Activated B cell treated with CpG ODN at 0.5 μM for 24 hours (primary cell): ENCODE measurements at regions of chr11 and their contacts with region 1.

Region 1: GRCh38 chr11:107689317-107690202 is 22.3 kb downstream of the SLN start:
- DNase-seq: peak; percentile 18
- ATAC-seq: peak; percentile 47
- H3K4me3 Mint-ChIP-seq: no peak overlapping the region
- H3K27ac Mint-ChIP-seq: no peak overlapping the region
- H3K4me1 Mint-ChIP-seq: peaks cover 3% of the 10 kb centered on the region
- H3K27me3 Mint-ChIP-seq: peaks cover 12% of the 10 kb centered on the region
- CTCF ChIP-seq: no peak

Region 2: GRCh38 chr11:106156290-106156937 is 1533.1 kb before region 1 on chr11:
- CTCF ChIA-PET with region 1: no interaction called
- POLR2A ChIA-PET with region 1: no interaction called
- intact Hi-C with region 1: loop called (anchors 5 kb)
- DNase-seq: no peak
- ATAC-seq: no peak
- H3K4me3 Mint-ChIP-seq: no peak overlapping the region
- H3K27ac Mint-ChIP-seq: no peak overlapping the region
- H3K4me1 Mint-ChIP-seq: no peaks in the 10 kb centered on the region
- H3K27me3 Mint-ChIP-seq: no peaks in the 10 kb centered on the region
- CTCF ChIP-seq: no peak

Region 3: GRCh38 chr11:106785913-106786650 is 903.5 kb before region 1 on chr11:
- CTCF ChIA-PET with region 1: no interaction called
- POLR2A ChIA-PET with region 1: no interaction called
- intact Hi-C with region 1: no loop called
- DNase-seq: no peak
- ATAC-seq: no peak
- H3K4me3 Mint-ChIP-seq: no peak overlapping the region
- H3K27ac Mint-ChIP-seq: no peak overlapping the region
- H3K4me1 Mint-ChIP-seq: no peaks in the 10 kb centered on the region
- H3K27me3 Mint-ChIP-seq: no peaks in the 10 kb centered on the region
- CTCF ChIP-seq: no peak

Region 4: DNA sequence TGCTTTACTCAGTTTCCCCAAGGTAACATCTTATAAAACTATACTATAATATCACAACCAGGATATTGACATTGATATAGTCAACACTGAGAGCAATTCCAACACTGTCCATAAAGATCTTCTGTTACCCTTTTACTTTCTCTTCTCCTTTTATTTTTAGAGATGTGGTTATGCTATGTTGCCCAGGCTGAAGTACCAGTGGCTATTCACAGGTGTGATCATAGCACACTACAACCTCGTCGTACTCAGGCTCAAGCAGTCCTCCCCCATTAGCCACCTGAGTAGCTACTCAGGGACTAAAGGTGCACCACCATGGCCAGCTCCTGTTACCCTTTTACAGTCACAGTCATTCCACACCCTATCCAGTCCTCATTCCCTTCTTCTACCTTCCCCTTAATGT is 351.6 kb before region 1 on chr11:
- CTCF ChIA-PET with region 1: no interaction called
- POLR2A ChIA-PET with region 1: no interaction called
- intact Hi-C with region 1: no loop called
- DNase-seq: no peak
- ATAC-seq: no peak
- H3K4me3 Mint-ChIP-seq: no peak overlapping the region
- H3K27ac Mint-ChIP-seq: no peak overlapping the region
- H3K4me1 Mint-ChIP-seq: peaks cover 13% of the 10 kb centered on the region
- H3K27me3 Mint-ChIP-seq: no peaks in the 10 kb centered on the region
- CTCF ChIP-seq: no peak

Region 5: GRCh38 chr11:107549253-107549953 is 140.2 kb before region 1 on chr11:
- CTCF ChIA-PET with region 1: interaction called, 37 read pairs
- POLR2A ChIA-PET with region 1: no interaction called
- intact Hi-C with region 1: loop called (anchors 1 kb)
- DNase-seq: no peak
- ATAC-seq: peak; percentile 67
- H3K4me3 Mint-ChIP-seq: no peak overlapping the region
- H3K27ac Mint-ChIP-seq: no peak overlapping the region
- H3K4me1 Mint-ChIP-seq: no peaks in the 10 kb centered on the region
- H3K27me3 Mint-ChIP-seq: no peaks in the 10 kb centered on the region
- CTCF ChIP-seq: peak; percentile 67

Region 6: GRCh38 chr11:107573438-107573837 is 116.1 kb before region 1 on chr11:
- CTCF ChIA-PET with region 1: interaction called, 10 read pairs
- POLR2A ChIA-PET with region 1: no interaction called
- intact Hi-C with region 1: loop called (anchors 1 kb)
- DNase-seq: no peak
- ATAC-seq: no peak
- H3K4me3 Mint-ChIP-seq: no peak overlapping the region
- H3K27ac Mint-ChIP-seq: no peak overlapping the region
- H3K4me1 Mint-ChIP-seq: peaks cover 2% of the 10 kb centered on the region
- H3K27me3 Mint-ChIP-seq: no peaks in the 10 kb centered on the region
- CTCF ChIP-seq: no peak